Gastrocnemius medialis (tissue), 4 donors: ENCODE measurements at regions of chr12 and their contacts with region 1.

Region 1: GRCh38 chr12:48151103-48151771 is 6.1 kb downstream of the ASB8 start:
- DNase-seq: peak; percentile 88 to 90
- ATAC-seq: peak; percentile 74 to 77
- H3K4me3 ChIP-seq: peak overlapping the region in 3 of 4 donors; percentile 18 to 42 (median 25)
- H3K27ac ChIP-seq: peak overlapping the region; percentile 84 to 98 (median 93)
- H3K4me1 ChIP-seq: peaks cover 59 to 87% of the 10 kb centered on the region in 2 donors
- H3K27me3 ChIP-seq: no peaks in the 10 kb centered on the region
- CTCF ChIP-seq: no peak
- POLR2A ChIP-seq: peak; percentile 59 to 84

Region 2: DNA sequence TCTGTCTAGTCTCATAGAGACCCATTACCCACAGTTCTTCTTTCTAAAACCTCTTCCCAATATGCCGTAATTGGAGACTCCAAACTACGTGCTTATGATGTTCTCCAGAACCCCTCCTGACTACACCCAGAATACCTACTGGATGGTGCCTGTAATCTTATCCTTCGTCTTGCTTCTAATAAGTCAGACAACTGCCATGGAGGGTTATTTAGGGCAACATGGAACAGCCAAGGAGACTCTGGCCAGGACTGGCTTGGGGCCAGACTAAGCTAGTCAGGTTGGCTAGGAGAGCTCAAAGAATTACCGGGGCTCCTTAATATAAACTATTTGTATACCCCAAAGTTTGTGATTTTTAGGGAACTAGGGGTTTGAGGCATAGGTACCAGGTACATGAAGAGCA is 25.3 kb before region 1 on chr12:
- in situ Hi-C with region 1: no loop called
- intact Hi-C with region 1: loop called (anchors 1 kb)
- DNase-seq: peak; percentile 85 to 94
- ATAC-seq: peak; percentile 84 to 86
- H3K4me3 ChIP-seq: peak overlapping the region; percentile 38 to 54 (median 48)
- H3K27ac ChIP-seq: peak overlapping the region; percentile 84 to 98 (median 93)
- H3K4me1 ChIP-seq: peaks cover 43 to 57% of the 10 kb centered on the region in 2 donors
- H3K27me3 ChIP-seq: no peaks in the 10 kb centered on the region
- CTCF ChIP-seq: no peak
- POLR2A ChIP-seq: peak; percentile 55 to 70

Region 3: DNA sequence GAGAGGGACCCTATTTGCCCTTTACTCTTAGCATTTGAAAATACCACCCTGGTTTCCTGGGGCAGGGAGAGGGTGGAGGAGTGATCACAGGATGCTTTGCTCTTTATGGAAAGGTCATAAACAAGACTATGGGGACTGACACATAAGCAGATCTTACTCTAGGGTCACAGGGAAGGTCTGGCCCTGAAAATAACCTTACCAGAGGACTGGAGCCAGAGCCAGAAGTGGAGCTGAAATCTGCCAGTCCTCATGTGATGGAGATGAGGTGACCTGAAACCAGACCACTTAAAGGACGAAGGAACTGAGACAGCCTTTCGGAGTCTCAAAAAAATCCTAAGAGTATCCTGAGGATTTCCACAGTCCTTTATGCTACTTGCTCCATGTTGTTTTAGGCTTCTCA is 19.7 kb before region 1 on chr12:
- in situ Hi-C with region 1: no loop called
- intact Hi-C with region 1: loop called (anchors 1 kb)
- DNase-seq: peak; percentile 40 to 80
- ATAC-seq: peak; percentile 55 to 70
- H3K4me3 ChIP-seq: no peak overlapping the region
- H3K27ac ChIP-seq: peak overlapping the region; percentile 84 to 98 (median 93)
- H3K4me1 ChIP-seq: peaks cover 48 to 54% of the 10 kb centered on the region in 2 donors
- H3K27me3 ChIP-seq: no peaks in the 10 kb centered on the region
- CTCF ChIP-seq: no peak
- POLR2A ChIP-seq: peak in 1 of 2 donors; percentile 30

Region 4: DNA sequence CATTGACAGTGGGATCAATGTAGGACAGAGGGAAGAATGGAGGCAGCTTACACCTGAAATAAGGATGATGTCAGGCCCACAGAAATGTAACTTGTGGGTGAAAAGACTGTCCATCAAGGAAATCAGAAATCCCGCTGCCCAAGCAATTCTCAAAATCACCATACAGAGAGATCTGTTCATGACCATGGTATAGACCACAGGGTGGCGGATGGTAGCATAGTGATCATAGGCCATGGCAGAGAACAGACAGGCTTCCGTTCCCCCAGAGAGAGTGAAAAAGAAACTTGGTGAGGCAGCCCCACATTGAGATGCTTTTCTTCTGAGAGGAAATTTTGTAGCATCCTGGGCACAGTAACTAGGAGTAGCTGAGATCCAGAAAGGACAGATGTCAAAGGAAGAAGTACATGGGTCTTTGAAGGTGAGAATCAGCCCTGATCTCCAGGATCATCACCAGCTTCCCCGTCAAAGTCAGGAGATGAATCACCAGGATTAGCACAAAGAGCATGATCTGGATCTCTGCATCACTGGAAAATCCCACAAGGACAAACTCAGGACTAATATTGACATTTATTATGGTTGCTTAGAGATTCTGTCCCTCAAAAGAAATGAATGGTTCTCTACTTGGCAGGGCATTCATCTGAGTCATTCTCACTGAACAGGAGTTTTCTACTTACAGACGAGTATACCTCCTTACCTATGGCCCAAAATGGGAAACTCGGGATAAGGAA is 205.0 kb after region 1 on chr12:
- in situ Hi-C with region 1: no loop called
- intact Hi-C with region 1: no loop called
- DNase-seq: no peak
- ATAC-seq: no peak
- H3K4me3 ChIP-seq: no peak overlapping the region
- H3K27ac ChIP-seq: no peak overlapping the region
- H3K4me1 ChIP-seq: peaks cover 10% of the 10 kb centered on the region in 2 donors
- H3K27me3 ChIP-seq: no peaks in the 10 kb centered on the region
- CTCF ChIP-seq: no peak
- POLR2A ChIP-seq: no peak